Ascending aorta (tissue), 2 donors: ENCODE measurements at regions of chr9 and their contacts with region 1.

Region 1: GRCh38 chr9:105205787-105206495 is 38.5 kb upstream of the SLC44A1 start:
- DNase-seq: peak in 1 of 2 donors; percentile 90
- H3K4me3 ChIP-seq: no peak overlapping the region
- H3K27ac ChIP-seq: peak overlapping the region; percentile 90
- H3K4me1 ChIP-seq: peaks cover 4 to 17% of the 10 kb centered on the region in 2 donors
- H3K27me3 ChIP-seq: no peaks in the 10 kb centered on the region
- CTCF ChIP-seq: no peak

Region 2: GRCh38 chr9:105173306-105173705 is 32.6 kb before region 1 on chr9:
- intact Hi-C with region 1: no loop called
- DNase-seq: no peak
- H3K4me3 ChIP-seq: no peak overlapping the region
- H3K27ac ChIP-seq: no peak overlapping the region
- H3K4me1 ChIP-seq: no peaks in the 10 kb centered on the region
- H3K27me3 ChIP-seq: no peaks in the 10 kb centered on the region
- CTCF ChIP-seq: no peak

Region 3: DNA sequence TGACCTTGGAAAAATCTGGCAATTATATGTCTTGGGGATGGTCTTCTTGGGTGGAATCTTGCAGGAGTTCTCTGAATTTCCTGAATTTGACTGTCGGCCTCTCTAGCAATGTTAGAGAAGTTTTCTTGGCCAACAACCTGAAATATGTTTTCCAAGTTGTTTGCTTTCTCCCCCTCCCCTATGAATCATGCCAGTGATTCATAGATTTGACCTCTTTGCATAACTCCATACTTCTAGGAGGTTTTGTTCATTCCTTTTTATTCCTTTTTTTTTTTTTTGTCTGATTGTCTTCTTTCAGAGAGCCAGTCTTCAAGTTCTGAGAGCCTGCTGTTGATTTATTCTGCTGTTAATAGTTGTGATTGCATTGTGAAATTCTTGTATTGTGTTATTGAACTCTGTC is 18.2 kb before region 1 on chr9:
- intact Hi-C with region 1: loop called (anchors 2 kb)
- DNase-seq: no peak
- H3K4me3 ChIP-seq: no peak overlapping the region
- H3K27ac ChIP-seq: no peak overlapping the region
- H3K4me1 ChIP-seq: no peaks in the 10 kb centered on the region
- H3K27me3 ChIP-seq: no peaks in the 10 kb centered on the region
- CTCF ChIP-seq: no peak

Region 4: GRCh38 chr9:105299190-105299854 is 93.4 kb after region 1 on chr9:
- intact Hi-C with region 1: loop called (anchors 5 kb)
- DNase-seq: peak; percentile 13 to 71
- H3K4me3 ChIP-seq: no peak overlapping the region
- H3K27ac ChIP-seq: peak overlapping the region; percentile 76 to 79
- H3K4me1 ChIP-seq: peaks cover 9 to 30% of the 10 kb centered on the region in 2 donors
- H3K27me3 ChIP-seq: no peaks in the 10 kb centered on the region
- CTCF ChIP-seq: no peak